ENCODE measurements at regions of chr7 and their contacts with region 1.

Region 1: GRCh38 chr7:94289071-94289470 is 105.6 kb upstream of the COL1A2 start:
- DNase-seq: peak; percentile 75

Region 2: DNA sequence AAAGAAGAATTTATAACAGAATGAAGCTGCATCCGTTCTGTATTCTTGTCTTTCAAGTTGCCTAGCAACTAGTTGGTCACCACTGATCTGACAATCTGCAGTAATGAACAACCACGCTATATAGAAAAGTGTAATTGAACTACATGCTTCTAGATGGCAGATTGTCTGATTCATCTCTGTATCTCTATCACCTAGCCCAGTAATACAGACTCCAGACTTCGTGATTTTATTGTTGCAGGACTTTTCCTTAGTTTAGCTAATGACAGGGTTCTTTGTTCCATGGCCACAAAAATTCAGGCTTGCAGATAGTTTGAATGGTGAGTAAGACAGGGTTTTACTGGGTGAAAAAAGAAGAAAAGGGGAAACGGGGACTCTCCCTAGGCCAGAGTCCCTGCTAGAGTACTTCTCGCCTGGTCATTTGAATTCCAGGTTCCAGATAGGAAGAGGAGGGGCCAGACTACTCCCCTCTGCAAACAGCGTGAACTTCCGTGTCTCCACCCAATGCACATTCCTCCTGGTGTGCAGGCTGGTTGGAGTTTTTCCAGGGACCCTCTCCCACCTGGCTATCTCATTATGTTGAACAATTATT is 151.5 kb after region 1 on chr7:
- intact Hi-C with region 1: loop called in 1 of 2 experiments (anchors 2 kb)
- DNase-seq: no peak

Measured in posterior vena cava (tissue), 2 donors.